PC-9 (cell line): ENCODE measurements at regions of chr11 and their contacts with region 1.

Region 1: DNA sequence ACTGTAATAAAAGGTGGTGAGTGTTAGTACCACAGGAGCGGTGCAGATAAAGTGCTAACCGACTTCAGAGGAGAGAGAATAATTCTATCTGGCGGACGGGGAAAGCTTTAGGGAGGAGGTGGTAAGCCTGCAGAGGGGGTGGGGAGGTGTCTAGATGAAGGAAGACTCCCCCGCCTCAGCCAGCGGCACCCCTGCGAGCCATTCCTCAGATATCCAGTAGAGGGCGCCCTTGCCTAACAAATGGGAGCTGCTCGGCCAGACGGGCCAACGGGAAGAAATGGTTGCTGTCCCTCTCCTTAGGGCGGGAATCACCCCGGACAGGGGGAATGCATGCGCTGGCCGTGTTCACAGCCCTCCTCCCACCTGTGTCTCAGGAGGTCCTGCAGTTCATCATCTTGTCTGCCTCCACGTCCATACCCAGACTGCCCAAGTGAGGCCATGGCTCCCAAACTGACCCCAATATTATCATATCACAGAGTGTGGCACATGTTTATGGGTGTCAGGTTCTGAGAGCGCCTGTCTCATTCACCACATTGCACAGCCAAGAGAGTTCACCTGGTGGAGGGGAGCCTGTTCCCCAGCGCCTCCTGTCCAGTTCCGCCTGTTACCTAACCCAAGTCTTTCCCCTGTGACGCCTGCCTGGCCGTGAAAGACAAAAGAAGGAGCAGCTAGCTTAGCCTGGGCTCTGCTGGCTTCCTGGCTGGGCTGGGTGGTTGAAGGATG is 85.5 kb downstream of the ST3GAL4 start:
- DNase-seq: peak; percentile 52 to 80
- H3K4me3 ChIP-seq: no peak overlapping the region
- H3K27ac ChIP-seq: no peak overlapping the region
- H3K4me1 ChIP-seq: peaks cover 3% of the 10 kb centered on the region; the same call in 1 of the 2 replicates
- H3K27me3 ChIP-seq: no peaks in the 10 kb centered on the region
- CTCF ChIP-seq: peak; percentile 98

Region 2: DNA sequence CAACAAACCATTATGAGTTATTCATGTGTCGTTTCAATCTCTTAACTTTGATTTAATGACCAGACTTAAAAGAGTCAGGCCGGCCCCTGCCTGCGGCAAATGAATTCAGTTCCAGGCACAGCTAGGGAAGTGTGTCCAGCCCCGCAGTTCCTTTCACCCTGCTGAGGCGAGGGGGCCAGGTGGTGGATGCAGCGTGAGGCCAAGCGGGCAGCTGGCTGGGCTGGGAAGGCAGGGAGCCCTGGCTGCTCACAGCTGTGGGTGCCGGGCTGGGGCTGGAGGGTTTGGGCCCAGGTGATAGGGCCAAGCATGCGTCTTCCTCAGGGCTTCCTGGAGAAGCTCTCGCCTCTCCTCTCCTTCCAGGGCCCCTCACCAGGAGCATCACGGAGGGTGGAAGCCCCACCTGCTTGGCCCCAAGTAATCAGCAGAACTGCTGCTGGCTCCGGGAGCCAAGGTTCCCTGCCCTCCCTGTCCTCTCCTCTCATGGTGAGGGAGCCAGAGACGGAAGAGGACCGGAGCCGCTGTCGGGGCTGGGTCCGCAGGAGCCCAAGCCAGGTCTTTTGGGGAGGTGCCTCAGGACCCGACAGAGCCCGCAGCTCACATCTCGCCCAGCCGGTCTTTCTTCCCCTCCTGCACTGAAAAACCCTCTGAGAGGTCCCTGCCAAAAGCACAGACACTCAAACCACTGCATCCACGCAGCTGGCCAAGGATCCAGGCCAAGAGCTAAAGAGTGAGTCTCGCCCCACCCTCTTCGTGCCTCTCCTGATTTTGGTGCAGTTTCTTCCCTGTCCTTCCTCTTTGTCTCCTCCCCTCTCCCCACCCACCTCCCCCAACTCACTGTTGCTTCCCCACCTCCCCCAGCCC is 11.5 kb after region 1 on chr11:
- CTCF ChIA-PET with region 1: no interaction called
- POLR2A ChIA-PET with region 1: no interaction called
- intact Hi-C with region 1: no loop called
- DNase-seq: no peak
- H3K4me3 ChIP-seq: no peak overlapping the region
- H3K27ac ChIP-seq: no peak overlapping the region
- H3K4me1 ChIP-seq: no peaks in the 10 kb centered on the region
- H3K27me3 ChIP-seq: no peaks in the 10 kb centered on the region
- CTCF ChIP-seq: no peak

Region 3: GRCh38 chr11:126716456-126717083 is 275.6 kb after region 1 on chr11:
- CTCF ChIA-PET with region 1: no interaction called
- POLR2A ChIA-PET with region 1: no interaction called
- intact Hi-C with region 1: loop called (anchors 10 kb)
- DNase-seq: peak in 1 of 2 experiments; percentile 30
- H3K4me3 ChIP-seq: no peak overlapping the region
- H3K27ac ChIP-seq: no peak overlapping the region
- H3K4me1 ChIP-seq: no peaks in the 10 kb centered on the region
- H3K27me3 ChIP-seq: peaks cover 82% of the 10 kb centered on the region
- CTCF ChIP-seq: peak; percentile 63

Region 4: GRCh38 chr11:127345819-127346459 is 905.0 kb after region 1 on chr11:
- CTCF ChIA-PET with region 1: no interaction called
- POLR2A ChIA-PET with region 1: no interaction called
- intact Hi-C with region 1: loop called (anchors 10 kb)
- DNase-seq: peak in 1 of 2 experiments; percentile 16
- H3K4me3 ChIP-seq: no peak overlapping the region
- H3K27ac ChIP-seq: no peak overlapping the region
- H3K4me1 ChIP-seq: no peaks in the 10 kb centered on the region
- H3K27me3 ChIP-seq: 0 out of 2 replicates have a peak, but pooled peaks cover 5% of the 10 kb centered on the region
- CTCF ChIP-seq: peak; percentile 76

Region 5: GRCh38 chr11:127493330-127494022 is 1052.5 kb after region 1 on chr11:
- CTCF ChIA-PET with region 1: no interaction called
- POLR2A ChIA-PET with region 1: no interaction called
- intact Hi-C with region 1: loop called (anchors 10 kb)
- DNase-seq: no peak
- H3K4me3 ChIP-seq: no peak overlapping the region
- H3K27ac ChIP-seq: no peak overlapping the region
- H3K4me1 ChIP-seq: no peaks in the 10 kb centered on the region
- H3K27me3 ChIP-seq: peaks cover 16% of the 10 kb centered on the region
- CTCF ChIP-seq: peak; percentile 56